ENCODE measurements at regions of chr2 and their contacts with region 1.

Region 1: GRCh38 chr2:172864182-172864581 is 128.5 kb downstream of the RAPGEF4 start:
- DNase-seq: no peak
- H3K4me3 Mint-ChIP-seq: no peak overlapping the region
- H3K27ac Mint-ChIP-seq: no peak overlapping the region
- H3K4me1 Mint-ChIP-seq: no peaks in the 10 kb centered on the region
- H3K27me3 Mint-ChIP-seq: peaks cover 13% of the 10 kb centered on the region

Region 2: DNA sequence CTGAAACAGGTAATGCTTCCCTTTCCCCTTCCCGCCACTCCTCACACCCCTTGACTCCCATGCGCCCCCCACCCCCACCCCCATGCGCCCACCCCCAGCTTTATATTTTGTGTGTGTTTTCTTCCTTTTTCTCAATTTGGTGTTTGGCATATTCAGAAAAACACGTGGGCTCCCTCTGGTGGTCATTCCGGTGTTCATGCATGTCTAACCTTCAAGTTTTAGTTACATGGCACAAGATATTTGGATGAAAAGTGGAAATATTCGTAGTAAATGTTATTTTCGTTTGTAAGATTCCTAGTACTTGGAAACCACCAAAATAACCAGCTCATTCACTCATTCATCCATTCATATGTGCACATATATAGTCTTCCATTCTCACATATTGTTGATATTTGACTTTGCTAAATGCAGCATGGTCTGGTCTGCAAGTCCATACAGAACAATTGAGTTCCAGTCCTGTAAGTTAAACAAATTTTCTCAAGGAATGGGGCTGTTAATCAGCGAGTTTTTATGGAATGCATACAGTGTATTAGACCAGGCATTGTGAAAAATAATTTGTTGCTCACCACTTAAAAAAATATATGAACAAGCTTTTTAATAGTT is 67.8 kb after region 1 on chr2:
- intact Hi-C with region 1: loop called (anchors 1 kb)
- DNase-seq: peak; percentile 26
- H3K4me3 Mint-ChIP-seq: no peak overlapping the region
- H3K27ac Mint-ChIP-seq: no peak overlapping the region
- H3K4me1 Mint-ChIP-seq: peaks cover 5% of the 10 kb centered on the region
- H3K27me3 Mint-ChIP-seq: no peaks in the 10 kb centered on the region